ENCODE measurements at regions of chr1 and their contacts with region 1.

Region 1: DNA sequence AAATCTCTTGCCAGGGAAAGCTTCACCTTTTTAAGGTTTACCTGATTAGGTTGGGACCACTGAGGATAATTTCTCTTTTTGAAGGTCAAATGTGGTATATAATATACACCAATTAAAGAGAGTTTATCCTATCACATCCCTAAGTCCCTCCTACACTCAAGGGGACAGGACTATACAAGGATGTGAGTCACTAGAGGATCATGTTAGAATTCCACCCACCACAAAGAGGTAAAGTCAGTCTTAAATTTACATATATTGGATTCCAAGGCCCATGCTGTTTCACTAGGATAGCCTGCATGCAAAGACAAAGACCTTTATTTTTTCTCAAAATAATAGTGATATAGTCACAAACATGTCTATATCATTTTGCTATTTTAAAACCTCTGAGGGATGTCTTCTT is 164.4 kb downstream of the GIPC2 start:
- DNase-seq: no peak

Region 2: DNA sequence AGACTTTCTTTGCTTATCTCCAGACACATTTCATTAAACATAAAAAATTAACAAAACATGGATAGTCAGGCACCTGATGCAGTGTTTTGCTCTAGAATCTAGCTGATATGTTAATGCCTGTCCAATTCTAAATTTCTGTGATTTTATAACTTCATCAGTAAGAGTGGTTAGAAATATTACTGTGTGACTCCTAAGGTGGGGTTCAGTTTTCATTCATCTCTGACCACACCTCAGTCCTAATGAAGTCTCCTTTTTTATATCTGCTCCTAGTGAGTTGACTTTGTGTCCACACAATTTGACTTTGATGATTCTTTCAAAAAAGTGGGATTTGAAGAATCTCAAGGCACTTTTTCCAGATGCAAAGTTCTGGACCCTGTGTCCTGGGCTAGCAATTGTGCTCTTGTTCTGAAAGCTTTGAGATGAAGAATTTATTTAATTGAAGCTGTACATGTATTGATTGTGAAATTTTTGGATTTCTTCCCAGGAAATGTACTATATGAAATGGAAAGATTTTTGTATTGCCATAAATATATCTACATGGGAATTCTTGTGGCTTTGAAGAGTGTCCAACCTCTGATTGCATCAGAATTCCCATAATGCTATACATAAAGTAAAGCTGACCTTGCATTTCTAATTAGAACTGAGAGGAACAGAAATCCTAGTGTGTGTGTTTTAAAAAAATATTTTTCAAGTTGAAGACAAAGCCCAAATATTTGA is 53.2 kb before region 1 on chr1:
- intact Hi-C with region 1: no loop called
- DNase-seq: no peak

Region 3: GRCh38 chr1:78263459-78263858 is 53.3 kb after region 1 on chr1:
- intact Hi-C with region 1: no loop called
- DNase-seq: no peak

Region 4: GRCh38 chr1:78279051-78279450 is 68.9 kb after region 1 on chr1:
- intact Hi-C with region 1: loop called in 1 of 2 experiments (anchors 2 kb)
- DNase-seq: no peak